ENCODE measurements at regions of chr14 and their contacts with region 1.

Region 1: GRCh38 chr14:105861985-105862465 is 335.6 kb downstream of the TMEM121 start:
- DNase-seq: peak; percentile 57
- ATAC-seq: peak; percentile 30
- H3K4me3 Mint-ChIP-seq: peak overlapping the region; percentile 98
- H3K27ac Mint-ChIP-seq: peak overlapping the region; percentile 99
- H3K4me1 Mint-ChIP-seq: peaks cover 1% of the 10 kb centered on the region
- H3K27me3 Mint-ChIP-seq: no peaks in the 10 kb centered on the region
- CTCF ChIP-seq: no peak

Region 2: DNA sequence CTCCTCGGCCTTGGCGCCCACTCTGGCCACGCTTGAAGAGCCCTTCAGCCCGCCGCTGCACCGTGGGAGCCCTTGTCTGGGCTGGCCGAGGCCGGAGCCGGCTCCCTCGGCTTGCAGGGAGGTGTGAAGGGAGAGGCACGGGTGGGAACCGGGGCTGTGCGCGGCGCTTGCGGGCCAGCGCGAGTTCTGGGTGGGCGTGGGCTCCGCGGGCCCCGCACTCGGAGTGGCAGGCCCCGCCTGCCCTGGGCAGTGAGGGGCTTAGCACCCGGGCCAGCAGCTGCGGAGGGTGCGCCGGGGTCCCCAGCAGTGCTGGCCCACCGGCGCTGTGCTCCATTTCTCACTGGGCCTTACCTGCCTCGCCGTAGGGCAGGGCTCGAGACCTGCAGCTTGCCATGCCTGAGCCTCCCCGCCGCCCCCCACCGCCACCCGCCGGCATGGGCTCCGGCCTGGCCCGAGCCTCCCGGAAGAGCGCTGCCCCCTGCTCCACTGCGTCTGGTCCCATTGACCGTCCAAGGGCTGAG is 314.3 kb before region 1 on chr14:
- CTCF ChIA-PET with region 1: no interaction called
- POLR2A ChIA-PET with region 1: no interaction called
- intact Hi-C with region 1: no loop called
- DNase-seq: no peak
- ATAC-seq: no peak
- H3K4me3 Mint-ChIP-seq: no peak overlapping the region
- H3K27ac Mint-ChIP-seq: no peak overlapping the region
- H3K4me1 Mint-ChIP-seq: no peaks in the 10 kb centered on the region
- H3K27me3 Mint-ChIP-seq: no peaks in the 10 kb centered on the region
- CTCF ChIP-seq: no peak

Region 3: GRCh38 chr14:105581551-105582341 is 280.3 kb before region 1 on chr14:
- CTCF ChIA-PET with region 1: no interaction called
- POLR2A ChIA-PET with region 1: interaction called, 15 read pairs
- intact Hi-C with region 1: no loop called
- DNase-seq: peak; percentile 36
- ATAC-seq: no peak
- H3K4me3 Mint-ChIP-seq: no peak overlapping the region
- H3K27ac Mint-ChIP-seq: peak overlapping the region; percentile 99
- H3K4me1 Mint-ChIP-seq: peaks cover 60% of the 10 kb centered on the region
- H3K27me3 Mint-ChIP-seq: no peaks in the 10 kb centered on the region
- CTCF ChIP-seq: no peak

Region 4: DNA sequence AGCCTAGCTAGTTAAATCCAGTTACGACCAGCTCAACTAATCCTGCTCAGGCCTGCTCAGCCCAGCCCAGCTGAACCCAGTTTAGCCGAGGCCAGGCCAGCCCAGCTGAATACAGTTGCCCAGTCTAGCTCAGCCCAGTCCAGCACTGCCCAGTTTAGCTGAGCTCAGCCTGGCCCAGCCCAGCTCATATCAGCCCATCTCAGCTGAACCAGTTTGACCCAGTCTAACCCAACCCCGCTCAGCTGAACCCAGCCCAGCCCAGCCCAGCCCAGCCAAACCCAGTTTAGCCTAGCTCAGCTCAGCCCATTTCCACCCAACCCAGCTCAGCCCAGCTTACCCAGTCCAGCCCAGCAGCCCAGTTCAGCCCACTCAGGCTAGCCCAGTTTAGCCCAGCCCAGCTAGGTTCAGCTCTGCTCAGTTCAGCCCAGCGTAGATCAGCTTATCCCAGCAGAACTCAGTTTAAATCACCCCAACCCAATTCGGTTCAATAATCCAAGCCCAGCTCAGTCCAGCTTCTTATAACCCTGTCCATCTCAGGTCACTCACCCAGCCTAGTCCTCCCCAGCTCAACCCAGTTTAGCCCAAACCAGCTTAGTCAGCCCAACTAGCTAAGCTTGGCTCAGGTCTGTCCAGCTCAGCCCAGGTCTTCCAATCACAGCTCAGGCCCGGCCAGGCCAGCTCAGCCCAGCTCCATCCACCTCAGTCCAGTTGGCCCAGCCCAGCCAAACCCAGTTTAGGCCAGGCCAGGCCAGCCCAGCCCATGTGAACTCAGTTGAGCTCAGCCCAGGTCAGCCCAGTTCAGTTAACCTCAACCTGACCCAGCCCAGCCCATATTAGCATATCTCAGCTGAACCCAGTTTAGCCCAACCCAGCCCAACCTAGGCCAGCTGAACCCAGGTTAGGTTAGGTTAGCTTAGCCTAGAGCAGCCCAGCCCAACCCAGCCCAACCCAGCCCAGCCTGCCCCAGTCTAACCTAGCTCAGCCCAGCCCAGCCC is 258.9 kb before region 1 on chr14:
- CTCF ChIA-PET with region 1: no interaction called
- POLR2A ChIA-PET with region 1: no interaction called
- intact Hi-C with region 1: no loop called
- DNase-seq: no peak
- ATAC-seq: peak; percentile 25
- H3K4me3 Mint-ChIP-seq: no peak overlapping the region
- H3K27ac Mint-ChIP-seq: peak overlapping the region; percentile 15
- H3K4me1 Mint-ChIP-seq: peaks cover 16% of the 10 kb centered on the region
- H3K27me3 Mint-ChIP-seq: no peaks in the 10 kb centered on the region
- CTCF ChIP-seq: no peak

Region 5: DNA sequence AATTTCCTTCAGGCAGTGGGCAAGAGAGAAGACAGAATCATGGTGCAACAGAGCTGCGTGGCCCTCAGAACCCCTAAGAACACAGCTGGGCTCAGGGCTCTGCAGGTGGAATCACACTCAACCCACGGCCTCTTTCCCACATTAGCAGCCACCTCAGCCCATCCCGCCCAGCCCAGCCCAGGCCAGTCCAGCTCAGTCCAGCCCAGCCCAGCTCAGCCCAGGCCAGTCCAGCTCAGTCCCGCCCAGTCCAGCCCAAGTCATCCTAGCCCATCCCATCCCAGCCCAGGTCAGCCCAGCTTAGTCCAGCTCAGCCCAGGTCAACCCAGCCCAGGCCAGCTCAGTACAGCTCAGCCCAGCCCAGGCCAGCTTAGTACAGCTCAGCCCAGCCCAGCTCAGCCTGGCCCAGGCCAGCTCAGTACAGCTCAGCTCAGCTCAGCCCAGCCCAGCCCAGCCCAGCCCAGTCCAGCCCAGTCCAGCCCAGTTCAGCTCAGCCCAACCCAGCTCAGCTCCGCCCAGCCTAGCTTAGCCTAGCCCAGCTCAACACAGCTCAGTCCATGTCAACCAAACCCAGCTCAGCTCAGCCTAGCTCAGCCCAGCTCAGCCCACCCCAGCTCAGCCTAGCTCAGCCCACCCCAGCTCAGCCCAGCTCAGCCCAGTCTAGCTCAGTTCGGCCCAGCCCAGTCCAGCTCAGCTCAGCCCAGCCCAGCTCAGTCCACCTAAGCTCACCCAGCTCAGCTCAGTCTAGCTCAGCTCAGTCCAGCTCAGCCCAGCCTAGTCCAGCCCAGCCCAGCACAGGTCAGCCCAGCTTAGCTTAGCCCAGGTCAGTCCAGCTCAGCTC is 152.5 kb before region 1 on chr14:
- CTCF ChIA-PET with region 1: no interaction called
- POLR2A ChIA-PET with region 1: interaction called, 207 read pairs
- intact Hi-C with region 1: loop called (anchors 2 kb)
- DNase-seq: no peak
- ATAC-seq: no peak
- H3K4me3 Mint-ChIP-seq: peak overlapping the region; percentile 75
- H3K27ac Mint-ChIP-seq: peak overlapping the region; percentile 85
- H3K4me1 Mint-ChIP-seq: peaks cover 48% of the 10 kb centered on the region
- H3K27me3 Mint-ChIP-seq: no peaks in the 10 kb centered on the region
- CTCF ChIP-seq: no peak

Region 6: DNA sequence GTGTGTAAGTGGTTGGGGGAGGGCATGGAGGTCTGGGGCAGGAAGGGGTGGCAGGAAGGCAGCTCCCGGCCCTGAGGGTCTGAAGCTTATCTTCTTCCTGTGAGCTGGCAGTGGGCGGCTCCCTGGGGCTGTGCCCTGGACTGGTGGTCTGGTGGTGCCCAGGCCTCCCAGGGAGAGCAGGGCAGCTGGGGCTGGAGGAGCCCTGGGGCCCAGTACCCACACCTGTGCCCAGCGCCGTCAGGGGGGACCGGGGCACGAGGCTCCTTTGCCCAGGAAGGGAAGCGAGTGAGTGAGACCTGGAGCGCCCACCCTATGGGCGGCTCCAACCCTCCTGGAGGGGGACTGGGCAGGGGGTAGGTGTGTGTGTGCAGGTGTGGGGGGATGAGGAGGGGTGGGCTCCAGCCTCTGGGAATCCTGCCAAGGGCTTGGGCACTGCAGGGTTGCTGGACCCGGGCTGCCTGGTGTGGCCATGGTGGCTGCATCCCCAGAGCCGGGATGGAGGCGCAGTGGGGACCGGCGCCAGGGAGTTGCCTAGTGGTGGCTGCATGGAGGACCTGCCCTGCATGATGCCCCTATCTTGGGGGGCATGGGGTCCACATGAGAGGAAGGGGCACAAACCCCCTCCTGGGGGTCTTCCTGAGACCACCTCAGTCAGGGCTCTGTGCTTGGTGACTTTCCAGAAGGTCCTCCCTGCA is 18.0 kb after region 1 on chr14:
- CTCF ChIA-PET with region 1: interaction called, 3 read pairs
- POLR2A ChIA-PET with region 1: interaction called, 43 read pairs
- intact Hi-C with region 1: no loop called
- DNase-seq: no peak
- ATAC-seq: no peak
- H3K4me3 Mint-ChIP-seq: no peak overlapping the region
- H3K27ac Mint-ChIP-seq: no peak overlapping the region
- H3K4me1 Mint-ChIP-seq: no peaks in the 10 kb centered on the region
- H3K27me3 Mint-ChIP-seq: no peaks in the 10 kb centered on the region
- CTCF ChIP-seq: no peak

Region 7: GRCh38 chr14:105926373-105927095 is 64.5 kb after region 1 on chr14:
- CTCF ChIA-PET with region 1: no interaction called
- POLR2A ChIA-PET with region 1: interaction called, 13 read pairs
- intact Hi-C with region 1: no loop called
- DNase-seq: no peak
- ATAC-seq: no peak
- H3K4me3 Mint-ChIP-seq: no peak overlapping the region
- H3K27ac Mint-ChIP-seq: no peak overlapping the region
- H3K4me1 Mint-ChIP-seq: peaks cover 24% of the 10 kb centered on the region
- H3K27me3 Mint-ChIP-seq: no peaks in the 10 kb centered on the region
- CTCF ChIP-seq: no peak

Region 8: DNA sequence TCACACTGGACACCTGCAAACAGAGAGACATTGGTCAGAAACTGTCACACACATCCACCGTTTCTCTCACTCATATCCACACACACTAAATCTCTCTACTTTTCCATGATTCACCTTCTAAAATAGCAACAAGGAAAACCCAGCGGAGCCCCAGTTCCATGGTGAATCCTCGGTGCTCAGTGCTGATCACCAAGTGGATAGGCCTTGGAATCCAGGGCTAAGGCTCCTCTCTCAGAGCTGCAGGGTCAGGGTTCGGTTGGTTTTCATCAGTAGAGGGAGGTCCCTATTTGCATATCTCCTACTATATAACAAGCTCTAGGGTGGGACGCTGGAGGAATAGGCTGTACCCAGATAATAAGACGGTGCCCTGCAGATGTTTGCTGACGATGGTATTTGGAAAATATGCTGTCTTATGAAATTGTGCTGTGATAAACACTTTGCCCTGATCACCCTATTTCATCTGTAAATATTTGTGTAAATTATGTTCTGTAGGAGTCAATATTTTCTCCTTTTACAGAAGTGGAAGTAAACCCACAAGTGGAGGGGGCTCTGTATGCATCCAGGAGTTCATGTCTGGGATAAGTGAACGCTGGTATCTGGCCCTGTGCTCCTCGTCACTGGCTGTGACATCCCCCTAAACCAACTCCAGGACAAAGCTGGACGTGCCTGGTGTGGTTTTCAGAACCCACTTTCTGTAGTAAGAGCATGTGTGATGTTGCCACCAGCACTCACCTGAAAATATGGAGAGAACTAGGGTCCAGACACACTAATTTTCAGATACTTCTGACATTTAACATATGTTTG is 373.5 kb after region 1 on chr14:
- CTCF ChIA-PET with region 1: no interaction called
- POLR2A ChIA-PET with region 1: interaction called, 15 read pairs
- intact Hi-C with region 1: no loop called
- DNase-seq: no peak
- ATAC-seq: no peak
- H3K4me3 Mint-ChIP-seq: peak overlapping the region; percentile 77
- H3K27ac Mint-ChIP-seq: peak overlapping the region; percentile 70
- H3K4me1 Mint-ChIP-seq: peaks cover 7% of the 10 kb centered on the region
- H3K27me3 Mint-ChIP-seq: peaks cover 9% of the 10 kb centered on the region
- CTCF ChIP-seq: no peak

Region 9: DNA sequence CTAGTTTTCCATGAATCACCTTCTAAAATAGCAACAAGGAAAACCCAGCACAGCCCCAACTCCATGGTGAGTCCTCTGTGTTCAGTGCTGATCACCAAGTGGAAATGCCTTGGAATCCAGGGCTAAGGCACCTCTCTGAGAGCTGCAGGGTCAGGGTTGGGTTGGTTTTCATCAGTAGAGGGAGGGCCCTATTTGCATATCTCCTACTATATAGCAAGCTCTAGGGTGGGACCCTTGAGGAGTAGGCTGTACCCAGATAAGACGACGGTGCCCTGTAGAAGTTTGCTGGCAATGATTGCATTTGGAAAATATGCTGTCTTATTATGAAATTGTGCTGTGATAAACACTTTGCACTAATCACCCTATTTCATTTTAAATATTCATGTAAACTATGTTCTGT is 676.2 kb after region 1 on chr14:
- CTCF ChIA-PET with region 1: no interaction called
- POLR2A ChIA-PET with region 1: interaction called, 21 read pairs
- intact Hi-C with region 1: no loop called
- DNase-seq: no peak
- ATAC-seq: no peak
- H3K4me3 Mint-ChIP-seq: peak overlapping the region; percentile 67
- H3K27ac Mint-ChIP-seq: peak overlapping the region; percentile 61
- H3K4me1 Mint-ChIP-seq: peaks cover 42% of the 10 kb centered on the region
- H3K27me3 Mint-ChIP-seq: peaks cover 6% of the 10 kb centered on the region
- CTCF ChIP-seq: no peak

Measured in activated B cell treated with CpG ODN at 0.5 μM for 24 hours (primary cell).